ENCODE measurements at regions of chr19 and their contacts with region 1.

Region 1: GRCh38 chr19:13833330-13834243 is 38.3 kb downstream of the ZSWIM4 start:
- DNase-seq: peak; percentile 98
- H3K4me3 ChIP-seq: peak overlapping the region; percentile 21 to 40 (median 26)
- H3K27ac ChIP-seq: peak overlapping the region; percentile 99 to 100 (median 100)
- H3K4me1 ChIP-seq: peaks cover 54 to 73% (median 65%) of the 10 kb centered on the region in 4 donors
- H3K27me3 ChIP-seq: no peaks in the 10 kb centered on the region
- CTCF ChIP-seq: peak; percentile 45 to 66 (median 60)
- EP300 ChIP-seq: no peak
- POLR2A ChIP-seq: no peak

Region 2: DNA sequence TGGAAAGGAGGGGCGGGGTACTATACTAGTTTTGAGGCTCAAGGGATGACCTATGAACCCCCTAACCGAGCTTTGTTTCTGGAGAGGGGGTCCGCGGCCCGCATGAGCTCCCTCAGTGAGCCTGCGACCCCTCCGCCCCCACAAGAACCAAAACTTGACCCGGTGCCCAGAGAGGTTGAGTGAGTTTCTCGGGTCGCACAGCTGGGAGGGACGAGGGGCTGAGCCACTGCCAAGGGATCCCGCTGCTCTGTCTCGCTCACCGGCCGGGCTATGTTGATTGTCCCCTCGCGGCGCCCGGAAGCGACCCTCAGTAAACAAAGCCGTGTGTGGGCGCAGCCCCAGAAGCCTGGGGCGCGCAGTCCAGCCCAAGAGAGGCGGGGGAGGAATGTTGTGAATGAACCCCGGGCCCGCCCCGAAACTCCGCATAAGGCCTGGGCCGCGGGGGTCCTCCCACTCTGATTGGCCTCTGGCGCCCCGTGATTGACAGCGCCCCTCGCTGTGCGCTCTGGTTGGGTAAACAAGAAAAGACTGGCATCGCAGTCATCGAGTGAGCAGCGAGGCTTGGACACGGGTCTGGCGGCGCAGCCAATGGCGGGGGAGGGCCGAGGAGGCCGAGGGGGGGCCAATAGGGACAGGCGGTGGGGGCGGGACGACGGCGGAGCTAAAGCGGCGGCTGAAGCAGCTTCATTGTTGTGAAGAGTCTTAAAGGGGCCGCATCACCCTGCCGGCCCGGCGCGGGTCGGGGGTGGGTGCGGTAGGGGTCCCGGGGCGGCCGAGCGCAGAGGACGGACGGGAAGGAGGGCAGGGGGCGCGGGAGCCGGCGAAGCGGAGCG is 38.6 kb before region 1 on chr19 and contains the start of gene ZSWIM4:
- intact Hi-C with region 1: loop called (anchors 5 kb)
- DNase-seq: peak; percentile 100
- H3K4me3 ChIP-seq: peak within 1 kb of the TSS; percentile 77 to 83 (median 80)
- H3K27ac ChIP-seq: peak within 1 kb of the TSS; percentile 89 to 97 (median 94)
- H3K4me1 ChIP-seq: peaks cover 23 to 43% (median 42%) of the 10 kb centered on the region in 4 donors
- H3K27me3 ChIP-seq: no peaks in the 10 kb centered on the region
- CTCF ChIP-seq: no peak
- EP300 ChIP-seq: no peak
- POLR2A ChIP-seq: peak; percentile 57
- total RNA-seq, gene ZSWIM4: 5.3 to 11.6 (median 7.8) TPM

Region 3: DNA sequence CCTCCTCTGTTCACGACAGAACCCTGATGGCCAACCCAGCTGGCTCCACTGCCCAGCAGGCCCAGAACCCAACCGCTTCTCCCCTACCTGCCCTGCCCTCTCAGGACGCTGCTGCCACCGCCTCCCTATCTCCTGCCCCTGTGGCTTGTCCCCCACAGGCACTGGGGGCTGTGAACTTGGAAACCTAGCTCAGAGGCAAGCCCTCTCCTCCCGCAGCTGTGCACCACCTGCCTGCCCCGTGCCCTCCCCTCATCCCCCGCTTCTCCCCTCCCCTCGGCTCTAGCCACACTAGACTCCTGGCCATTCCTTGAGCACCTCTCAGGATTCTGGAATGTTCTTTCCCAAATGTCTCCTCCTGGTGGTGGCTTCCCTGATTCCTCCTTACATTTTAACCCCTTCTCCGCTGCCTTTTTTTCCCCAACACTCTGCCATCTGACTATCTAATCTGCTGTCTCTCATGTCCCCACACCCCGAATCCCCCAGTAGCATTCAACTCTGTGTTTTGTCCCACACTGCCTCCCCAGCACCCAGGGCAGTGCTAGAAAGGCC is 50.0 kb after region 1 on chr19:
- intact Hi-C with region 1: no loop called
- DNase-seq: no peak
- H3K4me3 ChIP-seq: no peak overlapping the region
- H3K27ac ChIP-seq: no peak overlapping the region
- H3K4me1 ChIP-seq: peaks cover 15 to 32% (median 27%) of the 10 kb centered on the region in 4 donors
- H3K27me3 ChIP-seq: no peaks in the 10 kb centered on the region
- CTCF ChIP-seq: no peak
- EP300 ChIP-seq: no peak
- POLR2A ChIP-seq: no peak

Measured in esophagus muscularis mucosa (tissue), 4 donors.